Gastrocnemius medialis (tissue), 4 donors: ENCODE measurements at regions of chr16 and their contacts with region 1.

Region 1: DNA sequence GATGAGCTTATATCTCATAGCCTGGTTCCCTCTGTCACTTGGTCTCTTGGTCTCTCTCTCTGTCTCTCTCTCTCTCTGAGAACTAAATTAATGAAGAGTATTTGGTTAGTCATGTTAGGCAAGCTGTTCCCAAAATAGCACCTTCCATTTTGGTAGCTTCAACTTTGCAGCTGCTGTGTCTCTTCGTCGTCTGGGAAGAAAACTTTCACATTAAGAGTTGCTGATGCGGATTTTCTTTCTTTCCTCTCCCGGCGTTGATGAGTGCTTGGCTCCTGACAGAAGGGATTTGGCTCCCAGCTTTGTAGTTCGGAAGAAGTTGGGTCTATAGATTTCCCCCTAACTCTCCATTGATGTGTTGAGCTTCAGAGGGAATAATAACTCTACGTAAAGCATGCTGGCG is at the start of gene RBFOX1:
- DNase-seq: peak; percentile 51 to 67
- ATAC-seq: peak; percentile 69 to 73
- H3K4me3 ChIP-seq: peak within 1 kb of the TSS; percentile 55 to 78 (median 65)
- H3K27ac ChIP-seq: peak within 1 kb of the TSS; percentile 90 to 98 (median 94)
- H3K4me1 ChIP-seq: peaks cover 41 to 67% of the 10 kb centered on the region in 2 donors
- H3K27me3 ChIP-seq: no peaks in the 10 kb centered on the region
- CTCF ChIP-seq: no peak
- POLR2A ChIP-seq: peak; percentile 80 to 89
- total RNA-seq, gene RBFOX1: 42.5 to 98.8 (median 58.6) TPM

Region 2: GRCh38 chr16:7378024-7378695 is 45.5 kb after region 1 on chr16:
- in situ Hi-C with region 1: no loop called
- intact Hi-C with region 1: loop called (anchors 5 kb)
- DNase-seq: peak in 1 of 2 donors; percentile 51
- ATAC-seq: peak; percentile 66 to 83
- H3K4me3 ChIP-seq: peak overlapping the region in 3 of 4 donors; percentile 16 to 38 (median 38)
- H3K27ac ChIP-seq: peak overlapping the region; percentile 74 to 81 (median 80)
- H3K4me1 ChIP-seq: peaks cover 74 to 78% of the 10 kb centered on the region in 2 donors
- H3K27me3 ChIP-seq: no peaks in the 10 kb centered on the region
- CTCF ChIP-seq: no peak
- POLR2A ChIP-seq: no peak

Region 3: GRCh38 chr16:7390974-7391373 is 58.4 kb after region 1 on chr16:
- in situ Hi-C with region 1: no loop called
- intact Hi-C with region 1: loop called (anchors 1 kb)
- DNase-seq: peak; percentile 86 to 88
- ATAC-seq: peak; percentile 86 to 91
- H3K4me3 ChIP-seq: peak overlapping the region in 2 of 4 donors; percentile 3 to 16
- H3K27ac ChIP-seq: peak overlapping the region; percentile 77 to 88 (median 82)
- H3K4me1 ChIP-seq: peaks cover 65 to 76% of the 10 kb centered on the region in 2 donors
- H3K27me3 ChIP-seq: no peaks in the 10 kb centered on the region
- CTCF ChIP-seq: no peak
- POLR2A ChIP-seq: peak in 1 of 2 donors; percentile 12